Activated CD4-positive, alpha-beta memory T cell treated with anti-CD3 and anti-CD28 coated beads for 36 hours (primary cell): ENCODE measurements at regions of chr3 and their contacts with region 1.

Region 1: GRCh38 chr3:102089904-102090492 is 240.7 kb downstream of the NFKBIZ start:
- DNase-seq: no peak
- H3K4me3 Mint-ChIP-seq: no peak overlapping the region
- H3K27ac Mint-ChIP-seq: no peak overlapping the region
- H3K4me1 Mint-ChIP-seq: peaks cover 48% of the 10 kb centered on the region
- H3K27me3 Mint-ChIP-seq: no peaks in the 10 kb centered on the region

Region 2: GRCh38 chr3:101724329-101725193 is 365.4 kb before region 1 on chr3 and contains the start of gene CEP97:
- CTCF ChIA-PET with region 1: no interaction called
- POLR2A ChIA-PET with region 1: no interaction called
- intact Hi-C with region 1: loop called (anchors 1 kb)
- DNase-seq: peak; percentile 92
- H3K4me3 Mint-ChIP-seq: peak within 1 kb of the TSS; percentile 99
- H3K27ac Mint-ChIP-seq: peak within 1 kb of the TSS; percentile 99
- H3K4me1 Mint-ChIP-seq: peaks cover 46% of the 10 kb centered on the region
- H3K27me3 Mint-ChIP-seq: no peaks in the 10 kb centered on the region
- total RNA-seq, gene CEP97: 16.6 to 17.9 TPM

Region 3: GRCh38 chr3:101791778-101792177 is 298.2 kb before region 1 on chr3:
- CTCF ChIA-PET with region 1: no interaction called
- POLR2A ChIA-PET with region 1: no interaction called
- intact Hi-C with region 1: no loop called
- DNase-seq: no peak
- H3K4me3 Mint-ChIP-seq: no peak overlapping the region
- H3K27ac Mint-ChIP-seq: no peak overlapping the region
- H3K4me1 Mint-ChIP-seq: peaks cover 50% of the 10 kb centered on the region
- H3K27me3 Mint-ChIP-seq: no peaks in the 10 kb centered on the region

Region 4: DNA sequence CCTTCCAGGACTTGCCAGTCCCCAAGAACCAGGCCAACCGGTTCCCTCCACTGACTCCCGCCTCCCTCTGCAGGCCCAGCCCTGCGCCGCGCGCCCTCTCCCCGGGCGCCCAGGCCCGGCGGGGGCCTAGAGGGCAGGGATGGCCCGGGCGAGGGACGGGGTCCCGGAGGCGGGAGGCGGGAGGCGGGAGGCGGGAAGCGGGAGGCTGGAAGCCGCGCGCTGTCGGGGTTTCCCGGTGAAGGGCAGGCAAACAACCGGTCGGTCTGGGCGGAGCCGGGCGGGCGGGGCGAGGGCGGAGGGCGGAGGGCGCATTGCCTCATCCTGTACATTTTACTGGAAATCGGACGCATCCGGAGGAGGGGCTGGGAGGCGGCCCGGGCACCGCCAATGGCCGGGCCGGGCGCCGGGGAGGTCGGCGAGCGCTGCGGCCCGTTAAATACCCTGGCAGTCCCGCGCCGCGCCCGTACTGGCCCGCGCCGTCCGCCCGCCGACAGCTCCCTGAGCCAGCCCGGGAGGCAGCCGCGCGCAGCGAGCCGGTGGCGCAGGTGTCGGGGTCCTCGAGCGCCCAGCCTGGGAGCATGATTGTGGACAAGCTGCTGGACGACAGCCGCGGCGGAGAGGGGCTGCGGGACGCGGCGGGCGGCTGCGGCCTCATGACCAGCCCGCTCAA is 240.8 kb before region 1 on chr3 and contains the start of gene NFKBIZ:
- CTCF ChIA-PET with region 1: interaction called, 6 read pairs
- POLR2A ChIA-PET with region 1: interaction called, 19 read pairs
- intact Hi-C with region 1: loop called (anchors 1 kb)
- DNase-seq: peak; percentile 97
- H3K4me3 Mint-ChIP-seq: peak within 1 kb of the TSS; percentile 92
- H3K27ac Mint-ChIP-seq: peak within 1 kb of the TSS; percentile 99
- H3K4me1 Mint-ChIP-seq: peaks cover 45% of the 10 kb centered on the region
- H3K27me3 Mint-ChIP-seq: no peaks in the 10 kb centered on the region
- total RNA-seq, gene NFKBIZ: 65.9 to 74.9 TPM

Region 5: GRCh38 chr3:101950510-101950909 is 139.5 kb before region 1 on chr3:
- CTCF ChIA-PET with region 1: no interaction called
- POLR2A ChIA-PET with region 1: no interaction called
- intact Hi-C with region 1: loop called (anchors 1 kb)
- DNase-seq: peak; percentile 33
- H3K4me3 Mint-ChIP-seq: no peak overlapping the region
- H3K27ac Mint-ChIP-seq: peak overlapping the region; percentile 28
- H3K4me1 Mint-ChIP-seq: peaks cover 19% of the 10 kb centered on the region
- H3K27me3 Mint-ChIP-seq: no peaks in the 10 kb centered on the region

Region 6: GRCh38 chr3:102057781-102058421 is 32.1 kb before region 1 on chr3:
- CTCF ChIA-PET with region 1: interaction called, 3 read pairs
- POLR2A ChIA-PET with region 1: no interaction called
- intact Hi-C with region 1: loop called (anchors 2 kb)
- DNase-seq: no peak
- H3K4me3 Mint-ChIP-seq: no peak overlapping the region
- H3K27ac Mint-ChIP-seq: no peak overlapping the region
- H3K4me1 Mint-ChIP-seq: peaks cover 40% of the 10 kb centered on the region
- H3K27me3 Mint-ChIP-seq: peaks cover 1% of the 10 kb centered on the region

Region 7: GRCh38 chr3:102113411-102114041 is 23.5 kb after region 1 on chr3:
- CTCF ChIA-PET with region 1: no interaction called
- POLR2A ChIA-PET with region 1: interaction called, 9 read pairs
- intact Hi-C with region 1: loop called (anchors 1 kb)
- DNase-seq: peak; percentile 19
- H3K4me3 Mint-ChIP-seq: no peak overlapping the region
- H3K27ac Mint-ChIP-seq: peak overlapping the region; percentile 72
- H3K4me1 Mint-ChIP-seq: peaks cover 33% of the 10 kb centered on the region
- H3K27me3 Mint-ChIP-seq: no peaks in the 10 kb centered on the region

Region 8: GRCh38 chr3:102229062-102229655 is 139.2 kb after region 1 on chr3:
- CTCF ChIA-PET with region 1: interaction called, 20 read pairs
- POLR2A ChIA-PET with region 1: no interaction called
- intact Hi-C with region 1: loop called (anchors 5 kb)
- DNase-seq: peak; percentile 86
- H3K4me3 Mint-ChIP-seq: no peak overlapping the region
- H3K27ac Mint-ChIP-seq: no peak overlapping the region
- H3K4me1 Mint-ChIP-seq: peaks cover 15% of the 10 kb centered on the region
- H3K27me3 Mint-ChIP-seq: peaks cover 5% of the 10 kb centered on the region